ENCODE measurements at regions of chr22 and their contacts with region 1.

Region 1: GRCh38 chr22:38317122-38317994 is at the start of gene CSNK1E:
- DNase-seq: peak; percentile 91
- H3K4me3 ChIP-seq: peak within 1 kb of the TSS; percentile 62 to 96 (median 84)
- H3K27ac ChIP-seq: peak within 1 kb of the TSS; percentile 96 to 99 (median 98)
- H3K4me1 ChIP-seq: peaks cover 0 to 49% (median 48%) of the 10 kb centered on the region in 4 donors
- H3K27me3 ChIP-seq: no peaks in the 10 kb centered on the region
- CTCF ChIP-seq: no peak
- EP300 ChIP-seq: no peak
- POLR2A ChIP-seq: peak in 1 of 2 donors; percentile 31
- total RNA-seq, gene CSNK1E: 60.6 to 116 (median 73.3) TPM

Region 2: DNA sequence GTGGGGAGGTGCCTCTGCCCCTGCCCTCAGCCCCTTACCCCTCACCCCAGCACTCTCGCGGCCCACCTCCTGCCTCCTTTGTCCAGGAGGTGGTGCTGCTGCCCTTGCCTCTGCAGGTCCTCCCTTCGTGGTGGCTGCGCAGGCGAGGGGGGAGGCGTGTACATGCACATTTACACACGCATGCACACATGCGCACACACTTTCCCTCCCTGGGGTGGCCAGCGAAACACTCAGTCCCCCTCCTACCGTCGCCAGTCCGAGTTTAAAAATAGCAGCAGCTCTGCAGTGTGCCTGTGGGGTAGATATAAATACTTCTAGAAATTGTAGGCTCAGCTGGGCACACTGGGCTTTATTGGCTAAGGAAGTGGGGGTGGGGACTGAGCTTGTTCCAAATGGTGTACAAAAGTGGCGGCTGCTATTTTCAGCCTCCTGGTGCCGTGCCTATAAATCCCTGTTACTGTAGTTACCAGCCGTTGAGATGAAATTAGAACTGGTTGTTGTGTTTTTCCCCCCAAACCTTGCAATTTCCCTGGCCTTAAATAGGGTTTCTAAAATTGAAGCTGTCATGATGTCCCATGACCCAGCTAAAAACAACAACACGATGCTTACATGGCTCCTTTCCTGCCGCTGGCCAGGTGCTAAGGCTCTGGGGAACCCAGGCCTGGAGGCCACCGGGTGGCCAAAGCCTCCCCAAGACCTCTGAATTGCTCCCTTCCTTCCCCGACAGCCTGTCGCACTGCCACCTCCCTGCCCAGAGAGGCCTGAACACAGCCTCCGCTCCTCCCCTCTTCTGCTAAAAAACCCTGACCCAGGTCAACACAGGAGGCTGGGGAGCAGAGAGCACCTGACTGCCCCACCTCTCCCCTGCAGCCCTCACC is 247.7 kb before region 1 on chr22:
- intact Hi-C with region 1: loop called (anchors 5 kb)
- DNase-seq: peak; percentile 94
- H3K4me3 ChIP-seq: peak overlapping the region in 1 of 4 donors; percentile 23
- H3K27ac ChIP-seq: peak overlapping the region; percentile 75 to 90 (median 80)
- H3K4me1 ChIP-seq: peaks cover 0 to 28% (median 26%) of the 10 kb centered on the region in 4 donors
- H3K27me3 ChIP-seq: no peaks in the 10 kb centered on the region
- CTCF ChIP-seq: peak; percentile 40 to 71 (median 62)
- EP300 ChIP-seq: peak in 2 of 4 donors; percentile 42 to 69
- POLR2A ChIP-seq: no peak

Region 3: DNA sequence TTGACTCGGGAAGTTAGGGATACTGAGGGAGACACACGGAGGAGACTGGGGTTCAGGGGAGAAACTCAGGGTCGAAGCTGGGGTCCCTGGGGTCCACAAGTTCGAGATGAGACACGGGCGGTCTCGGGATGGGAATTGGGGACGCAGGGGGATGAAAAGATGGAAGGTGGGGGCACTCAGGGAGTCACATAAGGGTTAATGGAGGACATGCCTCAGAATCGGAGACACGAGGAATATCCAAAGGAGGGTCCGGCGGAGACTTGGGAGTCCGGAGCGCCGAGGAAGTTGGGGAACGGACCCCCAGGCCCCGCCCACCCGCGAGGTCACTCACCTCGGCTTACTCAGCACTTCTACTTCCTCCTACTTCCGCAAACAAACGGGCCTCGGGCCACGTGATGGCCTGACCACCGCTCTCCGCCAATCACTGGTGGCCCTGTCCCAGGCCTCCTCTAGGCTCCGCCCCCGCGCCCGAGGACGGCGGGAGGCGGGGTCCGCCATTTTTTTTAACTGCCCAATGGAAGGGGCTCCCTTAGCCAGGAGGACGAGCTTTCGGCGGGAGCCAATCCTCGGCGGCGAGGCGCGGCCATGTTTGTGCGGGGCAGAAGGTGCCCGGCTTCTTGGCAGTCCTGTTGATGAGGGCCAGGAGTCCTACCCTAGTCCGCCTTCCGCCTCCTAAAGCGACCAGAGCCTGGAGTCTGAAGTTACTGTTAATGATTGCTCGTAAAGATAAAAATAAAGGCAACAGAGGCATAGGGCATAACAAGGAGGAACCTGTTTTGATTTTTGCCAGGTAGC is 135.7 kb before region 1 on chr22 and contains the start of gene PLA2G6:
- intact Hi-C with region 1: loop called (anchors 2 kb)
- DNase-seq: peak; percentile 99
- H3K4me3 ChIP-seq: peak within 1 kb of the TSS; percentile 36 to 64 (median 58)
- H3K27ac ChIP-seq: peak within 1 kb of the TSS; percentile 79 to 92 (median 87)
- H3K4me1 ChIP-seq: peaks cover 0 to 31% (median 29%) of the 10 kb centered on the region in 4 donors
- H3K27me3 ChIP-seq: no peaks in the 10 kb centered on the region
- CTCF ChIP-seq: no peak
- EP300 ChIP-seq: peak in 1 of 4 donors; percentile 37
- POLR2A ChIP-seq: no peak
- total RNA-seq, gene PLA2G6: 10.7 to 36.2 (median 26.5) TPM

Region 4: DNA sequence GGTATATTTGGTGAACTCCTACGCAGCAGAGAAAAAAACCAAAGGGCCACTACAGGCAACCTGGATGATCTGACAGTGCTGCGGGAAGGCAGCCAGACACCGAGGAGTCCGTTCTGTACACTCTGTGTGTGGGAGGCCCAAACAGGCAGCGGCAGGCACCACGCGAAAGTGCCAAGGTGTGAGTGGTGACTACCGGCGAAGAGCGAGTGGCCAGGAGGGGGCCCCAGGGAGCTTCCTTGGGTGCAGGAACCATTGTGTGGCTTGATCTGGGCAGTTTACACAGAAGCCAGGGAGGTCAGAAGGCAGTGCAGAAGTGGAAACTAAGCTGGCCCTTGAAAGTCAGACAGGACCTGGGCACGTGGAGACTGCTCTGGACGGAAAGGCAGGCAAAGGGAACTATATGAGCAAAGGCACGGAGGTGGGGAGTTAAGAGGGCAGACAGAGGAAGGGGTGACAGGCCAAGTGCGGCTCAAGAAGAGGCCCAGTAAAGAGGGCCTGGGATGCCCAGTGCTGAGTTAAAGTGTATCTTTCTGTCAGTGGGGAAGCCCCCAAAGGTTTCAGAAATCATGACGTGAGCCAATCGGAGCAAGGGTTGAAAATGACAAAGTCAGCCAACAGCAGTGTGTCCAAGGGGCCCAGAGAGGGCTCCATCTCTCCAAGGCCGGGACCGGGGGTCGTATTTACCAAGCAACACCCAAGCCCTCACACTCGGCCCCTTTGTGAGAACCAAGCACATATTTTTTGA is 55.1 kb before region 1 on chr22:
- intact Hi-C with region 1: loop called (anchors 2 kb)
- DNase-seq: peak; percentile 79
- H3K4me3 ChIP-seq: no peak overlapping the region
- H3K27ac ChIP-seq: peak overlapping the region; percentile 74 to 93 (median 90)
- H3K4me1 ChIP-seq: peaks cover 0 to 84% (median 73%) of the 10 kb centered on the region in 4 donors
- H3K27me3 ChIP-seq: no peaks in the 10 kb centered on the region
- CTCF ChIP-seq: peak in 3 of 4 experiments; percentile 49 to 63 (median 50)
- EP300 ChIP-seq: no peak
- POLR2A ChIP-seq: no peak

Region 5: GRCh38 chr22:38272373-38273134 is 44.8 kb before region 1 on chr22 and contains the start of gene TMEM184B:
- intact Hi-C with region 1: loop called (anchors 2 kb)
- DNase-seq: peak; percentile 89
- H3K4me3 ChIP-seq: peak within 1 kb of the TSS; percentile 76 to 99 (median 94)
- H3K27ac ChIP-seq: peak within 1 kb of the TSS; percentile 87 to 97 (median 92)
- H3K4me1 ChIP-seq: peaks cover 0 to 53% (median 49%) of the 10 kb centered on the region in 4 donors
- H3K27me3 ChIP-seq: no peaks in the 10 kb centered on the region
- CTCF ChIP-seq: no peak
- EP300 ChIP-seq: no peak
- POLR2A ChIP-seq: peak in 1 of 2 donors; percentile 50
- total RNA-seq, gene TMEM184B: 42.6 to 96.4 (median 68.1) TPM

Measured in sigmoid colon (tissue), 7 donors.